ENCODE measurements at regions of chr11 and their contacts with region 1.

Region 1: GRCh38 chr11:29564486-29564885 is 452.3 kb downstream of the KCNA4 start:
- DNase-seq: no peak
- CTCF ChIP-seq: no peak

Region 2: GRCh38 chr11:29448246-29448877 is 116.1 kb before region 1 on chr11:
- CTCF ChIA-PET with region 1: no interaction called
- POLR2A ChIA-PET with region 1: no interaction called
- DNase-seq: no peak
- CTCF ChIP-seq: peak; percentile 15

Region 3: GRCh38 chr11:29518389-29519174 is 45.9 kb before region 1 on chr11:
- CTCF ChIA-PET with region 1: no interaction called
- POLR2A ChIA-PET with region 1: no interaction called
- DNase-seq: no peak
- CTCF ChIP-seq: no peak

Region 4: DNA sequence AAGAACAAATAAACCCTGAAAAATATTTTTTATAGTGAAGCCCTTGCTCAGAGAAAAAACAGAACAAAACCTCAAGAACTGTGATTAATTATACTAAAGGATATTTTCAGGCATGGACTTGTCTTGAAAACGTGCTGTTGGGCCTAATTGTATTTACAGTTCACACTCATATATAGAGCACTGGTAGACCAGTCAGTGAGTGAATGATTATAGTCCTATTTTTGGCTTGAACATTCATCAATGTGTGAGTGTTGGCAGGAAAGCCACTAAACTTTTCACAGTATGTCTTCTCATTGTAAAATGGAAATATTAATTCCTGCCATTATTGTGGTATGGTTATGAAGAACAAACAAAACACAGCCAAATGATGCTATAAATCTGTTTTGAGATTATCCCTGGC is 10.5 kb before region 1 on chr11:
- CTCF ChIA-PET with region 1: interaction called, 12 read pairs
- POLR2A ChIA-PET with region 1: no interaction called
- DNase-seq: no peak
- CTCF ChIP-seq: no peak

Region 5: GRCh38 chr11:29616611-29617010 is 52.1 kb after region 1 on chr11:
- CTCF ChIA-PET with region 1: no interaction called
- POLR2A ChIA-PET with region 1: no interaction called
- DNase-seq: no peak
- CTCF ChIP-seq: no peak